Breast epithelium (tissue), 4 donors: ENCODE measurements at regions of chr7 and their contacts with region 1.

Region 1: GRCh38 chr7:136900005-136900404 is 31.6 kb downstream of the CHRM2 start:
- DNase-seq: no peak
- H3K4me3 ChIP-seq: no peak overlapping the region
- H3K27ac ChIP-seq: no peak overlapping the region
- H3K4me1 ChIP-seq: no peaks in the 10 kb centered on the region
- H3K27me3 ChIP-seq: no peaks in the 10 kb centered on the region
- CTCF ChIP-seq: no peak
- POLR2A ChIP-seq: no peak

Region 2: DNA sequence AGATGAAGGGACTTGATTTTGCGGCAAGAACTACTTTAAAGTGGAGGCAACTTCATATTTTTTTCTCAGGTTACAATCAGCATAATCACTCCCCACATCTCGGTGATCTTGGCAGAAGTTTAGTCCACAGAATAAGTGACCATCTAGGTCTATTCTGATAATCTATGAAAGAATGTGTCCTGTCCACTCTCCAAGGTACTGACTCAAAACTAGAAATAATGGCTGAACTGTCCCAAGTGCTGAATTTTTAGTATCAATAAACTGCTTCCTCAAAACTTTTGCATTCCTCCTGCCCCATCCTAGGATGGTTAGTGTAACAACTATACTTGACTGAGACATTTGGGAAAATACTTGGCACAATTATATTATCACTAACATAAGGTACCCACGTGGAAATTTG is 42.4 kb before region 1 on chr7:
- intact Hi-C with region 1: no loop called
- DNase-seq: no peak
- H3K4me3 ChIP-seq: no peak overlapping the region
- H3K27ac ChIP-seq: no peak overlapping the region
- H3K4me1 ChIP-seq: no peaks in the 10 kb centered on the region
- H3K27me3 ChIP-seq: peaks cover 0 to 3% of the 10 kb centered on the region in 2 donors
- CTCF ChIP-seq: no peak
- POLR2A ChIP-seq: no peak

Region 3: DNA sequence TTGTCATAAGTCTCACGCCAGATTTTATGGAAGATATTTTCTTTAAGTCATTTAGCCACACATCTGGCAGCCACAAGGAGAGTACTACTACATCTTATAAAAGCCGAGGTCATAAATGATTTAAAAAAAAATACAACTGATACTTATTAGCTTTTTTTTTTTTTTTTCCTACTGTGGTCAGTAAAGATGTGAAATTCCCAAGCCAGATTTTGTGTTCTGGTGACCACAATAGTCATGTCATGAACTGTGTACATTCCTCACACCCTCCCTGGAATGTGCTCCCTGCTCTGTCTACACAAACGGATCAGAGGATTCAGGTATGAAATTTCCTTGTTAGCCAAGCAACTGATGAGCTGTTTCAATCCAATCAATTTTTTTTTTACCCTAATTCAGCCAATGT is 23.1 kb after region 1 on chr7:
- intact Hi-C with region 1: loop called (anchors 1 kb)
- DNase-seq: no peak
- H3K4me3 ChIP-seq: no peak overlapping the region
- H3K27ac ChIP-seq: no peak overlapping the region
- H3K4me1 ChIP-seq: no peaks in the 10 kb centered on the region
- H3K27me3 ChIP-seq: no peaks in the 10 kb centered on the region
- CTCF ChIP-seq: no peak
- POLR2A ChIP-seq: no peak

Region 4: DNA sequence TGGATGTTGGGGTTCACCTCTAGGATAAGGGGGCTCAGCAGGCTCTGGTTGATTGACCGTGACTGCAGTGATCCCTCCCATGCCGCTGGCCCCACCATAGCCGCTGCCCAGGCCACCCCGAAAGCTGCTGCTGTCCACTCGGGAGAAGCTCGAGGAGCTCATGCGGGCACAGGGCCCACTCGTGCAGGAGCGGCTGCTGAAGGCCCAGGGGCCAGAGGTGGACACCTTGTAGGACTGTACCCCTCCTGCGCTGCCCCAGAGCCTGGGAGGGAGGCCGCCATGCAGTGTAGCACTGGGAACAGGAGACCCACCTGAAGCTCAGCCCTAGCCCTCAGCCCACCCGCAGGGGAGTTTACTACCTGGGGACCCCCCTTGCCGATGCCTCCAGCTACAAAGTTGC is 38.5 kb after region 1 on chr7:
- intact Hi-C with region 1: no loop called
- DNase-seq: no peak
- H3K4me3 ChIP-seq: no peak overlapping the region
- H3K27ac ChIP-seq: no peak overlapping the region
- H3K4me1 ChIP-seq: no peaks in the 10 kb centered on the region
- H3K27me3 ChIP-seq: no peaks in the 10 kb centered on the region
- CTCF ChIP-seq: no peak
- POLR2A ChIP-seq: no peak